HEK293 (cell line): ENCODE measurements at regions of chr9 and their contacts with region 1.

Region 1: DNA sequence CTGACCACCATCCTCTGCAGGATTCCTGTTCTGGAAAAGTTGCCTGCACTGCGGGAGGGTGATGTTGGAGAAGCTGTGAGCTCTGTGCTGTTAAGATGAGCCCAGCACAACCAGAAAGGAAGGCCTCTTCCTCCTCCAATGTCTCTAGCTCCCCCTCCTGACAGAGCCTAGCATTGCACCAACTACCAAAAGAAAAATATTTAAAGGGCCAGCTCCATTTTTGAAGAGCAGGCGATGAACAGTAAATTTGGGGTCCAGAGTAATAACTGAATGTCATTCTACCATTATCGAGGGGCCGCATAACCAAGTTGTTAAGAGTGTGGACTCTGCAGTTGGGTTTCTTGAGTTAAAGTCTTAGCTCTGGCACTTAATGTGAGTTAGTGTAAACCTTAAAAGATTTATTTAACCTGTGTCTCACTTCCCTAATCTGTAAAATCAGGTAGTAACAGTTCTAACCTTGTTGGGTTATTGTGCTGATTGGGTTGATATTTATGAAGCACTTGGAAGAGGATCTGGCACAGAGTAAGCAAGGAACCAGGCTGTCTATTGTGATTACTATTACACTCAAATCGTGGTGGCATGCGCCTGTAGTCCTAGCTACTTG is 3.9 kb downstream of the TEX53 start:
- H3K4me3 ChIP-seq: no peak overlapping the region
- H3K27ac ChIP-seq: no peak overlapping the region
- H3K4me1 ChIP-seq: no peaks in the 10 kb centered on the region
- CTCF ChIP-seq: peak; percentile 45; the same call in 1 of the 2 replicates

Region 2: DNA sequence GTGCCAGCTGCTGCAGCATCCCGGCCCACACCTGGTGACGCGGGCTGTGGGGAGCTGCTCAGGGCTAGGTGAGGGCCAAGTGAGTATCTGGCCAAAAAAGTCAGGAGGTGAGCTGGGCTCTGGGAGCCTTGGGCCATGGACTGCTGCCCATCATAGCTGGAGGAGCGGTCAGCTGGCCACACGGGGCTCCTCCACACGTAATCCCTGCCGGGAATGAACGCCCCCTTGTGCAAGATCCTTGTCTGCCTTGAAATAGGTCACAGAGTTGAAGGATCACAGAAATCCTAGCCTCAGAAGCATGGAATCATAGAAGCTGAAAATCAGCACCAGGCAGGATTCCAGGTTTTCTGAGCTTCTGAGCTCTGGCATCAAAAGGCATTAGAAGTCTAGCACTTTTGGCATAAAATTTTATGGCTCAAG is 515.1 kb before region 1 on chr9:
- CTCF ChIA-PET with region 1: no interaction called
- POLR2A ChIA-PET with region 1: no interaction called
- H3K4me3 ChIP-seq: no peak overlapping the region
- H3K27ac ChIP-seq: no peak overlapping the region
- H3K4me1 ChIP-seq: no peaks in the 10 kb centered on the region
- CTCF ChIP-seq: no peak

Region 3: DNA sequence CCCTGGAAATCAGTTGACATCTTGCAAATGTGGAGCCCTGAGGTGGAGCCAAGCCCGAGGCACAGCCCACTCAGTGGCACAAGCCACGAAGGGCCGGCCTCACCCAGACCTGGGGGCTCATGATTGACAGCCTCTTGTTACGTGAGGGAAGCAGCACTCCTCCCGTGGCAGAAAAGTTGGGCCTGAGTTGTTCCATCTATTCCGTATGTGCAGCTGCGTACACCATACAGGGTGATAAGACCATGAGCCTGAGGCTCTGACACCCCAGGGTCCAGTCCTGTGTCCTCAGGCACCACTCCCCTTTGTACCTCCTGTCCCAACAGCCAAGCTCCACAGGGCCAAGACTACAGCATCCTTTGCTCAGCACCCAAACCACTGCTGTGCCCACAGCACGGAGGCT is 325.9 kb before region 1 on chr9:
- CTCF ChIA-PET with region 1: no interaction called
- POLR2A ChIA-PET with region 1: no interaction called
- H3K4me3 ChIP-seq: no peak overlapping the region
- H3K27ac ChIP-seq: no peak overlapping the region
- H3K4me1 ChIP-seq: no peaks in the 10 kb centered on the region
- CTCF ChIP-seq: no peak

Region 4: DNA sequence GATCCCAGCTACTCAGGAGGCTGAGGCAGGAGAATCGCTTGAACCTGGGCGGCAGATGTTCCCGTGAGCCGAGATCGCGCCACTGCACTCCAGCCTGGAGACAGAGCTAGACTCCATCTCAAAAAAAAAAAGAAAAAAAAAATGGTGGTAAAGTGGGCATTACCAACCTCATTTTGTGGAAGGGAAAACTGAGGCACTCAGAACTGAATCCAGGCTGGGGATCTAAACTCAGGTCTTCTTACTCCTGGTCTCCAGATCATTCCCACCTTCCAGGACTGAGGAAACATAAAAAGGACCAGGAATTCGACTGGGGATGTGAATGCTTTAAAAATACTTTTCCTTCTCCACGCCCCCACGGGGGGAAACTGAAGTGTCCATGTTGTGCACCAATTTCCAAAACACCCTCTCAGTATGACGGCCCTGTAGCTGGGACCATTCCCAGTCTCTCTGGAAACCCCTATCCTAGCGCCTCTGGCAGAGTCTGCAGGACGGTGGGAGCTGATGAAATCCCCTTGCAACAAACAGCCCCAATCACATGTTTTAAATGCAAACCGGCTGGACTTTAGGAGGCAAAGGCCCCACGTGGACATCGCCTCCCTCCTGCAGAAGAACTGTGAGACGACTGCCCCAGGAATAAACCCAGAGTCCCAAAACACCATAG is 257.0 kb before region 1 on chr9:
- CTCF ChIA-PET with region 1: interaction called, 13 read pairs
- POLR2A ChIA-PET with region 1: no interaction called
- H3K4me3 ChIP-seq: no peak overlapping the region
- H3K27ac ChIP-seq: no peak overlapping the region
- H3K4me1 ChIP-seq: no peaks in the 10 kb centered on the region
- CTCF ChIP-seq: no peak

Region 5: DNA sequence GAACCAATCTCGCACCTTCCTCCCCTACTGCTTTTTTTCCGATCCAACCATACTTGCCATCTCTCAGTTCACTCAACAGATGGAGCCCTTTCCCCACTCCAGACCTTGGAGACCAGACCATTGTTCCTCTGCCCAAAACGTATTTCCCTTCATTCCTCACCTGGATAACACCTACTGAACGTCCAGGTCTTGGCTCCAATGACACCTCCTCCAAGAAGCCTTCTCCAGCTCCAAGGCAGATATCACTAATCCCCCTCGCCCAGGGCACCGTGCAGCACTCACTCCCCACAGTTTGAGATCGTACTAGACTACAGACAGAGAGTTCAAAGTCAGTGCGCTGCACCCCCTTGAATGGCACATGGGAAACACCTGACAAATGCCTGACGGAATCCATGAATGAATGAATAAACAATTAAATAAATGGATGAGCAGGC is 218.8 kb before region 1 on chr9:
- CTCF ChIA-PET with region 1: interaction called, 71 read pairs
- POLR2A ChIA-PET with region 1: no interaction called
- H3K4me3 ChIP-seq: no peak overlapping the region
- H3K27ac ChIP-seq: no peak overlapping the region
- H3K4me1 ChIP-seq: no peaks in the 10 kb centered on the region
- CTCF ChIP-seq: peak; percentile 86

Region 6: DNA sequence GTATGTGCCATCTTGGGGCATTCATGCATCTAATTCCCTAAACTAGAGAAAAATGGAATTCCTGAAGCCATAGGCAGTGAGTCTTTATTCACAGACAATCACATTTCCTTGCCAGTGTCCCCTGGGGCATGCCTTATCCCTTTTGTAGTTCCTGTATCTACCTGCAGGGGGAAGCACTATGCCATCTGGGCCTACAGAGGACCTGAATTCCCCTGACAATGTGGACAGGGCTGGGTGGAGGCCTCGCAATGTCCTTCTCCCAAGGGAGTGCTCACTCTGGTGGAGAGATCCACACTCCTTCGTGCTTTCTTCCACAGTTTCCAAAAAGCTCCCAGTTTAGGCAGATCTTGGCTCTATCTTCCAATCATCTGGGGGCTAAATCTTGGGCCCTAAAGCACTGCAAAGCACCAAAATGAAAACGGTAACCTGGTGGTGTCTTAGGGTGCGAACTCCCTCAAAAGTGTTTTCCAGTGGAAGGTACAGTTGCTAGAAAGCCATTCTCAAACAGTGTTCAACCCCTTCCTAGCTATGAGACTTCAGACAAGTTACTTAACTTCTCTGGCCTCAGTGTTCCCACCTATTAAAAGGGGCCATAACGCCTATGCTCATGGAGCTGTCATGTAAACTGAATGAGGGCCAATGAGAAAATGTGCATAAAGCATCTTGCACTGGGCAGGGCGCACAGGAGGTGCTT is 165.9 kb before region 1 on chr9:
- CTCF ChIA-PET with region 1: interaction called, 128 read pairs
- POLR2A ChIA-PET with region 1: interaction called, 3 read pairs
- H3K4me3 ChIP-seq: no peak overlapping the region
- H3K27ac ChIP-seq: no peak overlapping the region
- H3K4me1 ChIP-seq: no peaks in the 10 kb centered on the region
- CTCF ChIP-seq: peak; percentile 65; the same call in 1 of the 2 replicates

Region 7: DNA sequence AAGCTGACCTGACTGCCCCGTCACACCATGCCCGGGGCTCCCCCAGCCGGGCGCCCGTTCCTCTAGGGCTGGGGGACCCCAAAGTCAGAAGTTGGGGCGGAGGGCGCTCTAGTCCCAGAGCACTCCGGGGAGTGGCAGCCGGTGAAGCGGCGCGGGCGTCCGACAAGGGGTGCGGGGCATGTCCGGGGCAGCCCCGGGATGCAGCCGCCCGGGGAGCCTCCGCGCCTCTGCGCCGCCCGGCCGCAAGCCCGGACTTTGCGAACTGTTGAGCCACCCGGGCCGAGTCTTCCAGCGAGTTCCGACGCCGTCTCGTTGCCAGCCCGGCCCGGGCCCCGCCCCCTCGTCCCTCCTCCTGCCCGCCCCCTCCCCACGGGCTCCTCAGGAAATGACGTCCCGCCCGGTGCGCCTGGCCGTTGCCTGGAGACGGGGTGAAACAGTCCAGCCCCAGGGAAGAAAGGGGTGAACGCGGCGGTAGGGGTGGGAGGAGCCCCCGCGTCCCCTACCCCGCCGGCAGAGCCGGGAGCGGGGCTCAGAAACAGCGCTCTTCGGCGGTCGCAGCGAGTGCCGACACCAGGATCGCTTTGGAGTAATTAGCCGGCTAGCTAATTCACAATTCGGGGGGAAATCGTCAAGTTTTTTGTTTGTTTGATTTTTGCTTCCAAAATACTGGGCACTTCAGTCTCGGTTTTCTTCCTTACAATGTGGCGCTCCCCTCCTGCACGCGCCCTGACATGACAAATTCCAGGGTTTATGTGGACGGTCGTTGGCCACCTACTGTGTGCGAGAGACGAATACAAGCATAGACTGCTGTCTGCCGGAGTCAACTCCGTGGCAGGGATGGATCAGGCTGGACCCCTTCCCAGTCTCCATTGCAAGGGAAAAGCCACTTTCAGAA is 148.2 kb before region 1 on chr9 and contains the start of gene WHRN:
- CTCF ChIA-PET with region 1: interaction called, 15 read pairs
- POLR2A ChIA-PET with region 1: no interaction called
- H3K4me3 ChIP-seq: peak within 1 kb of the TSS; percentile 66
- H3K27ac ChIP-seq: no peak within 1 kb of the TSS; the same call in 1 of the 2 replicates
- H3K4me1 ChIP-seq: peaks cover 10% of the 10 kb centered on the region
- CTCF ChIP-seq: no peak

Region 8: GRCh38 chr9:114518599-114519022 is 135.0 kb before region 1 on chr9:
- CTCF ChIA-PET with region 1: no interaction called
- POLR2A ChIA-PET with region 1: no interaction called
- H3K4me3 ChIP-seq: no peak overlapping the region
- H3K27ac ChIP-seq: no peak overlapping the region
- H3K4me1 ChIP-seq: no peaks in the 10 kb centered on the region
- CTCF ChIP-seq: no peak

Region 9: DNA sequence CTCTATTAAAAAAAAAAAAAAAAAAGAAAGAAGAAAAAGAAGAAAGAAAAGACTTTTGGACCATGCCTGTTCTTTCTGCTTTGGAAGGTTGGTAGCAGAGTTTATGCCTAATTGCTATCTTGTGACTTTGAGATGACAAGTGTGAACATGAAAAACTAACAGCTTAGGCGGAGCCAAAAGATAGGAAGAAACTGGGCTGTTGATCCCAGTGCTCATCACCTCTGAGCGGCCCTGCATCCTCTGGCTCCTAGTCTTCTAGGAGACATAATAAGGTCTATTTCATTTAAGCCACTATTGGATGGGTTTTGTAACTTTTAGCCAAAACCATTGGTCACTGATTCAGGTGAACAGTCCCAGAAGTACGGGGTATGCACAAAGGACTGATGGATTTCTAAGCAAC is 100.5 kb before region 1 on chr9:
- CTCF ChIA-PET with region 1: no interaction called
- POLR2A ChIA-PET with region 1: no interaction called
- H3K4me3 ChIP-seq: no peak overlapping the region
- H3K27ac ChIP-seq: no peak overlapping the region
- H3K4me1 ChIP-seq: no peaks in the 10 kb centered on the region
- CTCF ChIP-seq: no peak

Region 10: GRCh38 chr9:114641967-114642366 is 11.7 kb before region 1 on chr9:
- CTCF ChIA-PET with region 1: interaction called, 17 read pairs
- POLR2A ChIA-PET with region 1: no interaction called
- H3K4me3 ChIP-seq: no peak overlapping the region
- H3K27ac ChIP-seq: no peak overlapping the region
- H3K4me1 ChIP-seq: no peaks in the 10 kb centered on the region
- CTCF ChIP-seq: no peak